ENCODE measurements at regions of chr5 and their contacts with region 1.

Region 1: GRCh38 chr5:112995764-112996618 is 19.4 kb downstream of the DCP2 start:
- DNase-seq: peak; percentile 70 to 78
- H3K4me3 ChIP-seq: no peak overlapping the region
- H3K27ac ChIP-seq: no peak overlapping the region
- H3K4me1 ChIP-seq: no peaks in the 10 kb centered on the region
- H3K27me3 ChIP-seq: no peaks in the 10 kb centered on the region
- CTCF ChIP-seq: peak; percentile 74 to 89 (median 86)
- POLR2A ChIP-seq: no peak

Region 2: GRCh38 chr5:113330533-113331208 is 334.7 kb after region 1 on chr5:
- intact Hi-C with region 1: loop called (anchors 5 kb)
- DNase-seq: peak; percentile 13 to 17
- H3K4me3 ChIP-seq: no peak overlapping the region
- H3K27ac ChIP-seq: no peak overlapping the region
- H3K4me1 ChIP-seq: peaks cover 0 to 7% of the 10 kb centered on the region in 2 donors
- H3K27me3 ChIP-seq: no peaks in the 10 kb centered on the region
- CTCF ChIP-seq: peak in 4 of 6 experiments; percentile 12 to 43 (median 41)
- POLR2A ChIP-seq: no peak

Region 3: DNA sequence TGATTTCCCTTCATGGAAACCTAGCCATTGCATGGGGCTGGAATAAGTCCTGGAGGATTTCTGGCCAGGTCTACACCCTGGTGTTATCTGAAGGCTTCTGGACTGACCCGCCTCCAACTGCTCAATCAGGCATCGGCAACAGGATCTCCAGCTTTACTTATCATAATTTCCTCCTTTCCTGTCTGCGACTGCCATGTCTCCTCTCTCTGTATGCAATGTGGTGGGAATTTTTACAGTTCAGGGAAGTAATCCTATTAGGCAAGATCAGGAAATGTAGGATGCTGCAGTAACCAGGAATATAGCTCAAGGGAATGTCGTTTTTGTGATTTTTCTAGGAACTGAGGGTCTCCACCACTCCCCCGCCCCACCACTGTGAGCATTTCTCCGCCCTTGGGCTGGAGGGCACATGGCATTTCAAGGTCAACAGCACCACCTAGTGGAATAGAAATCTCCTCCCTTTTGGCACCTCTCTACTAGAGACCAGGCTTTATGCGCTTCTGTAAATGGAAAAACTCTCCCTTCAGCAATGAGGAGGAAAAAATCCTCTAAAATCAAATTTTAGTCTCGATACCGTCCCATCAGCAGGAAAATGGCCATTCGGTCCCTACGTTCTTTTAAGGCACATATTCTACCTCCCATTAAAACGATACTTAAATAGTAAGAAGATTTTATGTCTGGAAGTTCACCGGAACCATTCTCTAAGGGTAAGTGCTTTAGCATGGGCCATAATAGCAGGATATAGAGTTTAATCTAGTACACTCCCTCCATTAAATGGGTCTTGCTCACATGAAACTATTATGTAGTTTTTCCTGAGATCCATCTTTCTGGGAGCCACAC is 610.5 kb after region 1 on chr5:
- intact Hi-C with region 1: loop called (anchors 10 kb)
- DNase-seq: peak; percentile 28 to 32
- H3K4me3 ChIP-seq: no peak overlapping the region
- H3K27ac ChIP-seq: no peak overlapping the region
- H3K4me1 ChIP-seq: no peaks in the 10 kb centered on the region
- H3K27me3 ChIP-seq: no peaks in the 10 kb centered on the region
- CTCF ChIP-seq: peak; percentile 28 to 76 (median 63)
- POLR2A ChIP-seq: no peak

Measured in thyroid gland (tissue), 4 donors.